ENCODE measurements at regions of chr10 and their contacts with region 1.

Region 1: DNA sequence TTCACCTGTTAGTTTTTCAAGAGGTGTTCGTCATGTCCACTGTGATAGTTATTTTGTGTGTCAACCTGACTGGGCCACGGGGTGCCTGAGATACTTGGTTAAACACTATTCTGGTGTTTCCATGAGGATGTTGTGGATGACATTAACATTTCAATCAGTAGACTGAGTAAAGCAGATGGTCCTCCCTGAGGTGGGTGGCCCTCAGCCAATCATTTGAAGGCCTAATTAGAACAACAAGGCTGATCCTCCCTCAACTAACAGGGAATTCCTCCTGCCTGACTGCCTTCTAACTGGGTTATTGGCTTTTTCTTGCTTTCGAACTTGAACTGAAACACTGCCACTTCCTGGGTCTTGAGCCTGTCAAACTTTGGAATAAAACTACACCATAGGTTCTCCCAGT is 75.8 kb downstream of the ENO4 start:
- DNase-seq: no peak
- H3K4me3 ChIP-seq: no peak overlapping the region
- H3K27ac ChIP-seq: no peak overlapping the region
- H3K4me1 ChIP-seq: no peaks in the 10 kb centered on the region
- H3K27me3 ChIP-seq: no peaks in the 10 kb centered on the region
- CTCF ChIP-seq: no peak

Region 2: GRCh38 chr10:116899626-116900025 is 25.4 kb before region 1 on chr10:
- CTCF ChIA-PET with region 1: no interaction called
- POLR2A ChIA-PET with region 1: no interaction called
- intact Hi-C with region 1: no loop called
- DNase-seq: no peak
- H3K4me3 ChIP-seq: no peak overlapping the region
- H3K27ac ChIP-seq: no peak overlapping the region
- H3K4me1 ChIP-seq: no peaks in the 10 kb centered on the region
- H3K27me3 ChIP-seq: no peaks in the 10 kb centered on the region
- CTCF ChIP-seq: no peak

Region 3: DNA sequence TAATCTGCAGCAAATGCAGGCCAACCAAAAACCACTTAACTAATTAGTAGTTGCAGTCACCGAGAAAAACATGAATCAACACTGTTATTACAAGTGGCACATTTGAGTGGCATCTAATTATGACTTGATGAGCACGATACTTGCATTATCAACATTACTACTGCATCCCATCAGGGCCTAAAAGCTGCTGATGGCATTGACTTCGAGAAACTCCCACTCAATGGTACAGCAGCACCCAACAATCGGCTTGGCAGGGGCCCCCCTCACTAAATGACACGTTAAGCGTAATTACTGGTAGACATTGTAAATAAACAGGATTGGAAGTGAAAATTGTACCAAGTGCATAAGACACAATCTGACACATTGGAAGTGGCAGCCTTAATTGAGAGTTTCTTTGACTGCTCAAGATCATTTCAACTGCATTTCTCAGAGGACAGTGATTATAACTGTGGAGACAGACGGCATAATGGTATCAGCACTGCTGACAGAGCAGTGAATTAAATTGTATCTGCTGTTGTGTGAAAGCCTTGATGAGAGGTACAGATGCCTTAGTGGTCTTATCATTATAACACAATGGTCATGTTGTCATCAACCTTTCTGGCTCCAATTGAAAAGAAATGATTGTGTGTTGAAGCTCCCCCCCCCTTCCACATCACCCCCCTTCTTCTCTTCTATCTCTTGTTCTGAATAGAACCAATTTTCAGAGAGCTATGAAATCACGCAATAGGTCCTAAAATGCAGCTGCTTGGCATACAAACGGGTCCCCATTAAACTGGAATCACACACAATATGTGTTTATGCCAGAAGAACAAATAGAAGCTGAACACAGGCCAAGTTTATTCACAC is 36.6 kb after region 1 on chr10:
- CTCF ChIA-PET with region 1: no interaction called
- POLR2A ChIA-PET with region 1: interaction called, 10 read pairs
- intact Hi-C with region 1: no loop called
- DNase-seq: no peak
- H3K4me3 ChIP-seq: no peak overlapping the region
- H3K27ac ChIP-seq: no peak overlapping the region
- H3K4me1 ChIP-seq: no peaks in the 10 kb centered on the region
- H3K27me3 ChIP-seq: no peaks in the 10 kb centered on the region
- CTCF ChIP-seq: no peak

Region 4: GRCh38 chr10:116985611-116986010 is 60.6 kb after region 1 on chr10:
- CTCF ChIA-PET with region 1: no interaction called
- POLR2A ChIA-PET with region 1: no interaction called
- intact Hi-C with region 1: no loop called
- DNase-seq: no peak
- H3K4me3 ChIP-seq: no peak overlapping the region
- H3K27ac ChIP-seq: no peak overlapping the region
- H3K4me1 ChIP-seq: no peaks in the 10 kb centered on the region
- H3K27me3 ChIP-seq: no peaks in the 10 kb centered on the region
- CTCF ChIP-seq: no peak

Measured in PC-9 (cell line).